Heart left ventricle (tissue), 16 donors: ENCODE measurements at regions of chr17 and their contacts with region 1.

Region 1: GRCh38 chr17:4565209-4566141 is 5.1 kb upstream of the GGT6 start:
- DNase-seq: peak in 4 of 5 donors; percentile 57 to 75 (median 68)
- ATAC-seq: peak; percentile 57 to 86 (median 82)
- H3K4me3 ChIP-seq: no peak overlapping the region
- H3K27ac ChIP-seq: peak overlapping the region in 3 of 12 donors; percentile 13 to 42 (median 16)
- H3K4me1 ChIP-seq: peaks cover 0 to 19% (median 5%) of the 10 kb centered on the region in 12 donors
- H3K27me3 ChIP-seq: no peaks in the 10 kb centered on the region
- CTCF ChIP-seq: peak; percentile 72 to 92 (median 83)
- POLR2A ChIP-seq: no peak

Region 2: DNA sequence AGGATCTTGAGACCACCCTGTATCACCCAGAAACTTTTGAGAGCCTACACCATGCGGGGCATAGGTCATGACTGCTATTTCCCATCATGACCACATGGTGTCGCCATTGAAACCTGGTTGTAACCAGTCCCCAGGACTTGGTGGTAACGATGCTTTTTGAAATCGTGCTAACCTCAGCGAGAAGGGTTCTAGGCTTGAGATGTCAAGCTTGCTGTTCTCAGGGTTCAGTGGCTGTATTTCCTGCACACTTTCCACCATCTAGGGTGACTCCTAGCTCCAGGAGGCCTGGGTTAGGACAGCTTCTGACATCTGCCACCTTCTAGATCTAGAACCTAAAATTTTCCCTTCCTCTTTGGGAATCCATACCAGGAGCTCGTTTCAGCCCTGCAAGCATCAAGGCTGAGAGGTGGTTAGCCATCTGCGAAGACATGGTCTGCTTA is 144.8 kb before region 1 on chr17:
- intact Hi-C with region 1: loop called in 6 of 10 experiments (anchors 5 kb)
- DNase-seq: peak in 3 of 5 donors; percentile 43 to 62 (median 54)
- ATAC-seq: peak in 3 of 4 donors; percentile 88 to 92 (median 90)
- H3K4me3 ChIP-seq: no peak overlapping the region
- H3K27ac ChIP-seq: no peak overlapping the region
- H3K4me1 ChIP-seq: peaks cover 0 to 4% (median 0%) of the 10 kb centered on the region in 12 donors
- H3K27me3 ChIP-seq: no peaks in the 10 kb centered on the region
- CTCF ChIP-seq: peak; percentile 77 to 92 (median 83)
- POLR2A ChIP-seq: no peak

Region 3: DNA sequence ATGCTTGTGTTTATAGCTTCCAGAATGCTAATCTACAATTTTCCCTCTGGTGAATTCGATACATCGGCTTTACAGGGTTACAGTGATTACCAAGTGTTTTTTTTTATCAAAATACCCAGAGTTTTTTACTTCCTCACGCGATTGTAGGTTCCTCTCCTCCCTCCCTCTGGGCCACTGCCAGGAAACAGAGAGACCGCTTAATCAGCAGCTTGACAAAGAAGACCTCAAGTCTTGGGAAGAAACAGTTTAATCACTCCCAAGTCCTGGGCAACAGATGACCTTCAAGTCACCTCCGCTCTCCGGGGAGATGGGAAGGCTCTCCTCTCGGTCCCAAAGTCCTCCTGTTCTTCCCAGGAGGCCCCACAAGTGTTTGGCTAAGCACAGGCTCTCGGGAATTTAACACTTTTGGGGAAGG is 42.3 kb after region 1 on chr17:
- intact Hi-C with region 1: loop called in 1 of 10 experiments (anchors 5 kb)
- DNase-seq: peak in 4 of 5 donors; percentile 76 to 91 (median 78)
- ATAC-seq: peak; percentile 24 to 33 (median 27)
- H3K4me3 ChIP-seq: peak overlapping the region in 2 of 12 donors; percentile 6 to 24
- H3K27ac ChIP-seq: peak overlapping the region in 9 of 12 donors; percentile 1 to 84 (median 43)
- H3K4me1 ChIP-seq: peaks cover 0 to 49% (median 17%) of the 10 kb centered on the region in 12 donors
- H3K27me3 ChIP-seq: no peaks in the 10 kb centered on the region
- CTCF ChIP-seq: no peak
- POLR2A ChIP-seq: no peak

Region 4: DNA sequence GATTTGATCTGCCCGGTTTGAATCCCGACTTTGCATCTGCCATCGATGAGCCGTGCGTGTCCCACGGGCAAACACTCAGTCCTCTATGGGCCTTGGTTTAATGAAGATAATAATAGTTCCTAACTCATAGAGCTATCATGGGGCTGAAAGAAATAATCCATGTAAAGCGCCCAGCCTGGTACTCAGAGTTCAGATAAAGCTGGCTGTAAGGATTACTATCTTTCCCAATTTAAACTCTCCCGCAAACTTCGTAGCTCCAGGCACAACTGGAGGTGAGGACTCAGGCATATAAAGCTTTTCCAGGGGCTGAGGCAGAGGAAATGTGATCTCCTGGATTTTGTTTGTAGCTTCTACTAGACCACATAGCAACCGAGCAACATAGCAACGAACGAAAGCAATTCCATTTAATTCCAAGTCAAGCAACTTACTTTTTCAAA is 59.7 kb after region 1 on chr17:
- intact Hi-C with region 1: loop called (anchors 1 to 2 kb)
- DNase-seq: no peak
- ATAC-seq: peak; percentile 48 to 69 (median 60)
- H3K4me3 ChIP-seq: no peak overlapping the region
- H3K27ac ChIP-seq: peak overlapping the region in 3 of 12 donors; percentile 3 to 46 (median 37)
- H3K4me1 ChIP-seq: peaks cover 0 to 13% (median 8%) of the 10 kb centered on the region in 12 donors
- H3K27me3 ChIP-seq: peaks cover 0 to 2% (median 0%) of the 10 kb centered on the region in 9 donors
- CTCF ChIP-seq: no peak
- POLR2A ChIP-seq: no peak

Region 5: DNA sequence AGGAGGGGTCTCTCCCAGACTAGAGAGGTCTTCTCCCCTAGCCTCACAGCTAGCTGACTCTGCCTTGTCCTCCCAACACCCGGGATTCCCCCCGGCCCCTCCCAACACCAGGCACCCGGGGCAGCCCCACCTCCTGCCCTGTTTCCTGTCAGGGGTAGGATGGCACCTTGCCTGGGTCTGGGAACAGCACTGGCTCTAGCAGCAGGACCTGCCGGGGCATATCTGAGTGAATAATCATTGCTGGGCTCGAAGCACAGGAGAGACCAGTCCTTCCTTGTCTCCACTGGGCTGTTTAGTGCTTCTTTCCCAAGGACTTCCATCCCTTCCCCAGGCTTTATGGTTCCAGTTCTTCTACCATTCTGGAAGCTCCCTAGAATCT is 293.4 kb after region 1 on chr17:
- intact Hi-C with region 1: no loop called
- DNase-seq: peak; percentile 67 to 80 (median 74)
- ATAC-seq: peak; percentile 73 to 93 (median 87)
- H3K4me3 ChIP-seq: peak overlapping the region in 6 of 12 donors; percentile 2 to 29 (median 11)
- H3K27ac ChIP-seq: peak overlapping the region; percentile 51 to 88 (median 78)
- H3K4me1 ChIP-seq: peaks cover 4 to 54% (median 40%) of the 10 kb centered on the region in 12 donors
- H3K27me3 ChIP-seq: no peaks in the 10 kb centered on the region
- CTCF ChIP-seq: no peak
- POLR2A ChIP-seq: no peak

Region 6: GRCh38 chr17:4881761-4882555 is 316.5 kb after region 1 on chr17:
- intact Hi-C with region 1: loop called in 1 of 10 experiments (anchors 10 kb)
- DNase-seq: peak in 3 of 5 donors; percentile 43 to 76 (median 60)
- ATAC-seq: peak; percentile 50 to 78 (median 66)
- H3K4me3 ChIP-seq: no peak overlapping the region
- H3K27ac ChIP-seq: no peak overlapping the region
- H3K4me1 ChIP-seq: peaks cover 0 to 26% (median 0%) of the 10 kb centered on the region in 12 donors
- H3K27me3 ChIP-seq: no peaks in the 10 kb centered on the region
- CTCF ChIP-seq: peak; percentile 69 to 86 (median 76)
- POLR2A ChIP-seq: no peak

Region 7: DNA sequence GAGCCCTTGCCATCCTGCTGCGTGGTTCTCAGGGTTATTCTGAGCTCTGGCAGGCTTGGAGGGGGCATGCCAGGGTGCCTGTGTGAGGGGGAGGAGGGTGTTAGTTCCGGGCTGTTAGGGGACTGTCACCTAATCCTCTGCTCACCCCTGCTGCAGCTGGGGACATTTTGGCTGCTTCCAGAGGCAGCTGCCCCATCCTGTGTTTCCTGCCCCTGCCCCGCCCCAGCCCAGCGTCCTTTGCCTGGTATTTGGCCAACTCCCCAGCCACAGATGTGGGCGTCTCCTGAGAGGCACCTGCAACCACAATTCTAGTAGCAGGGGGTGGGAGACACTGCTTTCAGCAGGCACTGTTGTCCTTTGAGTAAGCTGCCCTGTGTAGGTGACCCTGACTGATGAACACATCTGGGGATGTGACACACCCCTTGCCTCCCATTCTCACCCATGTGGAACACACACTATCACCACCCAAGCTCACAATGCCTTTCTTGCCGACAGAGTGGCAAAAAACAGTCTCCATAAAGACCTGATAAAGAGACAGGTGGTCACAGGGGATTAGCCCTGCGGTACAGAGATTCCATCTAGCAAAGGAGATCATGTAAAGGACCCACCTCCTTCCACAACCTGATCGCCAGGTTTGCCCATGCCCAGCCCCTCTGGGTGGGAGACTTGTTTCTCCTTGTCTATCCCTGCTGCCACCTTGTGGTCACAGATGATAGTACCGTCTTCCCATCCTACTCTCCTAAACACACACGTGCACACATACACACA is 337.8 kb after region 1 on chr17 and contains the start of gene CHRNE:
- intact Hi-C with region 1: loop called in 1 of 10 experiments (anchors 10 kb)
- DNase-seq: peak in 4 of 5 donors; percentile 72 to 76 (median 74)
- ATAC-seq: peak in 2 of 4 donors; percentile 35 to 46
- H3K4me3 ChIP-seq: peak within 1 kb of the TSS in 7 of 12 donors; percentile 6 to 57 (median 26)
- H3K27ac ChIP-seq: peak within 1 kb of the TSS in 7 of 12 donors; percentile 33 to 77 (median 63)
- H3K4me1 ChIP-seq: peaks cover 0 to 42% (median 24%) of the 10 kb centered on the region in 12 donors
- H3K27me3 ChIP-seq: peaks cover 0 to 32% (median 11%) of the 10 kb centered on the region in 9 donors
- CTCF ChIP-seq: peak; percentile 68 to 85 (median 74)
- POLR2A ChIP-seq: no peak
- total RNA-seq, gene CHRNE: 0.23 to 1.4 (median 0.48) TPM